Endothelial cell of umbilical vein (primary cell): ENCODE measurements at regions of chr1 and their contacts with region 1.

Region 1: GRCh38 chr1:43414634-43415223 is 25.0 kb downstream of the SZT2 start:
- DNase-seq: peak; percentile 81
- H3K4me3 ChIP-seq: no peak overlapping the region
- H3K27ac ChIP-seq: no peak overlapping the region
- H3K4me1 ChIP-seq: peaks cover 7% of the 10 kb centered on the region
- H3K27me3 ChIP-seq: no peaks in the 10 kb centered on the region
- CTCF ChIP-seq: peak; percentile 68 to 79
- POLR2A ChIP-seq: no peak

Region 2: DNA sequence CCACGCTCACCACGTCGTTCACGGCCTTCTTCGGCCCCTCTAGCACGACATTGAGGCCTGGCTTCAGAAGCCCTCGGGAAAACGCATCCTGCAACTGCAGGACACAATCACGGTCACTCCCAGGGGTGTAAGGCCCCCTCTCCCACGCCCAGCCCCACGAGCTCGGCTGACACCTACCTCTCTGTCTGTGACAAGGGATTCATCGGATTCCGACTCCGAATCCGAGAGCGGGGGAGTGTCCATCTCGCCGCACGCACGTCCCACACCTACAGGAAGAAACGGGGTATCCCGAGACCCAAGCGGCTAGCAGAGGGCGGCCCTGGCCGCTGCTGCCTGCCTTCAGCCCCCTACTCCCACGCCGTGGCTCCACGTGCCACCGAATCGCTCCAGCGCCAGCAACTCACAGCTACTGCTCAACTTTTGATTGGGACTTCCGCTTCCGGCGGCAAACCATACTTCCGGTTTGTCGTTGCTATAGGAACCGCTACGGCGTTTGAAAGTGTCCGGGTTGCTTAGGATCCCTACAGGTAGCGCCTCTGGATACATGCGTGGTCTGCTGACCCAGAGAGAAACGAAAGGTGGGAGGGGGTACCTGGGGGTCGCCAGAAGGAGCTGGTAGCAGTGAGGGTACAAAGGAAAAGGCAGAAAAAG is 242.7 kb before region 1 on chr1 and contains the starts of genes CFAP57 and EBNA1BP2:
- CTCF ChIA-PET with region 1: interaction called, 14 read pairs
- POLR2A ChIA-PET with region 1: no interaction called
- dilution Hi-C with region 1: no loop called
- intact Hi-C with region 1: no loop called
- DNase-seq: peak; percentile 94
- H3K4me3 ChIP-seq: peak within 1 kb of the TSS; percentile 6 to 81 (median 51)
- H3K27ac ChIP-seq: peak within 1 kb of the TSS; percentile 30
- H3K4me1 ChIP-seq: peaks cover 12% of the 10 kb centered on the region
- H3K27me3 ChIP-seq: peaks cover 0 to 2% of the 10 kb centered on the region in 2 experiments
- CTCF ChIP-seq: no peak
- POLR2A ChIP-seq: peak; percentile 81
- total RNA-seq, gene CFAP57: 0.28 and 0.88 TPM in 2 replicates
- total RNA-seq, gene EBNA1BP2: 104 and 105 TPM in 2 replicates

Region 3: DNA sequence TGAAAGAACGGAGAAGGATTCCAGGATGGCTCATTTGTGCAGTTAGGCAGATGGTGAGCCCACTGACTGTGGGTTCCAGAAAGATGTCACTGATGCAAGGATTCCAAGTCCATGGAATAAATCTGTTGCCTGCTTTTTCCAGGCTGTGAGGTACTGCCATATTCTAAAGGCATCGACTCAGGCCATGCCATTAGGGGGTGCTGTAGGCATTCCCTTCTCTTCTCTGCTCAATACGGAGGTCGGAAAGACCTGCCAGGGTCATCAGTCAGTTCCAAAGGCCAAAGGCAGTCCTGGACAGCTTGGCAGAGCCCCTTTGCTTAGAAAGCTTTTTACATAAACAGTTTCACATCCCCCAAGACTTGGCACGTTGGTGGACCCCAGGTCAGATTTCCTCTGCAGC is 176.6 kb before region 1 on chr1:
- CTCF ChIA-PET with region 1: interaction called, 74 read pairs
- POLR2A ChIA-PET with region 1: no interaction called
- dilution Hi-C with region 1: loop called (anchors 25 kb)
- intact Hi-C with region 1: loop called (anchors 1 kb)
- DNase-seq: peak; percentile 77
- H3K4me3 ChIP-seq: no peak overlapping the region
- H3K27ac ChIP-seq: no peak overlapping the region
- H3K4me1 ChIP-seq: peaks cover 6% of the 10 kb centered on the region
- H3K27me3 ChIP-seq: no peaks in the 10 kb centered on the region
- CTCF ChIP-seq: peak; percentile 81 to 86
- POLR2A ChIP-seq: no peak

Region 4: GRCh38 chr1:43317817-43318471 is 96.8 kb before region 1 on chr1:
- CTCF ChIA-PET with region 1: interaction called, 12 read pairs
- POLR2A ChIA-PET with region 1: no interaction called
- dilution Hi-C with region 1: no loop called
- intact Hi-C with region 1: no loop called
- DNase-seq: no peak
- H3K4me3 ChIP-seq: no peak overlapping the region
- H3K27ac ChIP-seq: no peak overlapping the region
- H3K4me1 ChIP-seq: no peaks in the 10 kb centered on the region
- H3K27me3 ChIP-seq: no peaks in the 10 kb centered on the region
- CTCF ChIP-seq: no peak
- POLR2A ChIP-seq: no peak

Region 5: GRCh38 chr1:43389326-43390313 is 25.1 kb before region 1 on chr1 and contains the starts of genes MED8 and SZT2:
- CTCF ChIA-PET with region 1: interaction called, 13 read pairs
- POLR2A ChIA-PET with region 1: interaction called, 3 read pairs
- dilution Hi-C with region 1: no loop called
- intact Hi-C with region 1: no loop called
- DNase-seq: peak; percentile 97
- H3K4me3 ChIP-seq: peak within 1 kb of the TSS; percentile 83 to 98 (median 96)
- H3K27ac ChIP-seq: peak within 1 kb of the TSS; percentile 70
- H3K4me1 ChIP-seq: peaks cover 18% of the 10 kb centered on the region
- H3K27me3 ChIP-seq: no peaks in the 10 kb centered on the region
- CTCF ChIP-seq: no peak
- POLR2A ChIP-seq: peak; percentile 83
- total RNA-seq, gene MED8: 41.9 and 45.6 TPM in 2 replicates
- total RNA-seq, gene SZT2: 49.9 and 50.3 TPM in 2 replicates